Endothelial cell of umbilical vein (primary cell): ENCODE measurements at regions of chr5 and their contacts with region 1.

Region 1: DNA sequence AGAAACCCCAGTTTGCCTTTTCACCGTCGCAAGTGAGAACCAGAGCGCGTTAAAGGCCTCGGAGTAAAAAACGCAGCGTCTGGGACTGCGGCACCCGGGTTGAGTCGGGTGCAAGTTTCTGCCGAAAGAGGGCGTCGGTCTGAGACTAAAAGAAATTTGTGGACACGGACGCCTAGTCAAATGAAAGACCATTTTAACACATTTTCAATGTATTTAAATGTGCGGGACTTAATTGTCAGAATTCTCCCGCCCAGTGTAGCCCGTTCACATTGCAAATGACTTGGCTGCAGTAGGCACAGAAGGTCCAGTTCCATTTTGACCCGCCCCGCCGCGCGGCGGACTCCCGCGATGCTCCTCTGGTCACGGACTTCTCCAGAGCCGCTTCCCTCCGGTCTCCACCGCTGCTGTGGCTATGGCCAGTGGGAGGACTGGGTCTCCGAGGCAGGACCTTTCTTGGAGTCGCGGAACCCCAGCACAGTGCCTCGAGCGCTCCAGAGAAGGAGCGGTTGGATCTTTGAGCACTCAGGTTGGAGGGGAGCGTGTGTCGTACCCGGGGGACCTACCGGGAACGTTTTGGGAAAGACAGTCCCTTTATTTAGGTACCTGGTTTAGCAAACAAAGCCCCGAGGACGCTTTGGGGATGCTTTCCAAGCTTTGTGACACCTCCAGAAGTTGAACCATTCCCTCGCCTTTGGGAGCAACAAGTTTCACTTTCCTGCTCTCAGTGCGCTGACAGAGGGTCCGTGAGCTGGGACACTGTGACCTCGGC is 1.2 kb upstream of the NPR3 start:
- DNase-seq: peak; percentile 75
- H3K4me3 ChIP-seq: peak overlapping the region; percentile 60 to 77 (median 65)
- H3K27ac ChIP-seq: no peak overlapping the region
- H3K4me1 ChIP-seq: peaks cover 11% of the 10 kb centered on the region
- H3K27me3 ChIP-seq: peaks cover 29 to 44% of the 10 kb centered on the region in 2 experiments
- CTCF ChIP-seq: peak; percentile 60 to 72
- POLR2A ChIP-seq: no peak

Region 2: DNA sequence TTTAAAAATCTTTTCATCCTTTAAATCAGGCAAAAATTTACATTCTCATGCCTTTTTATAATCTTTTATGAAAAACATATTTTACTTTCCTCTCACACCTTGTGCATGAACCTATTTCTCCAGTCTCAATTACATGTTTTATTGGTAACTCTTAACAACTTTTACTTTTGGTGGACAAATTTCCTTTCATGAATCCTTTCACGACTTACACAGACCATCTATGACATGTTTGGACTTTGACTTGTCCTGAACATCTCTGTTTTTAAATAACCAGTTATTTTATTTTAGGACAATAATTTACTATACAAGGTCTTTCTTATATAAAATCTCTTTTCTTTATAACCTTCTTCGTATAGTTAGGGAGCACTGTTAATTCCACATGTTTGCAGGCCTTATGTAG is 370.8 kb before region 1 on chr5:
- CTCF ChIA-PET with region 1: no interaction called
- POLR2A ChIA-PET with region 1: no interaction called
- dilution Hi-C with region 1: no loop called
- intact Hi-C with region 1: no loop called
- DNase-seq: no peak
- H3K4me3 ChIP-seq: no peak overlapping the region
- H3K27ac ChIP-seq: no peak overlapping the region
- H3K4me1 ChIP-seq: no peaks in the 10 kb centered on the region
- H3K27me3 ChIP-seq: no peaks in the 10 kb centered on the region
- CTCF ChIP-seq: no peak
- POLR2A ChIP-seq: no peak

Region 3: GRCh38 chr5:32942225-32942989 is 232.4 kb after region 1 on chr5:
- CTCF ChIA-PET with region 1: no interaction called
- POLR2A ChIA-PET with region 1: interaction called, 5 read pairs
- dilution Hi-C with region 1: no loop called
- intact Hi-C with region 1: loop called (anchors 2 kb)
- DNase-seq: peak; percentile 26
- H3K4me3 ChIP-seq: no peak overlapping the region
- H3K27ac ChIP-seq: no peak overlapping the region
- H3K4me1 ChIP-seq: no peaks in the 10 kb centered on the region
- H3K27me3 ChIP-seq: no peaks in the 10 kb centered on the region
- CTCF ChIP-seq: peak; percentile 38 to 40
- POLR2A ChIP-seq: no peak

Region 4: GRCh38 chr5:32984851-32985610 is 275.1 kb after region 1 on chr5:
- CTCF ChIA-PET with region 1: no interaction called
- POLR2A ChIA-PET with region 1: no interaction called
- dilution Hi-C with region 1: no loop called
- intact Hi-C with region 1: loop called (anchors 5 kb)
- DNase-seq: peak; percentile 18
- H3K4me3 ChIP-seq: no peak overlapping the region
- H3K27ac ChIP-seq: peak overlapping the region; percentile 3
- H3K4me1 ChIP-seq: no peaks in the 10 kb centered on the region
- H3K27me3 ChIP-seq: no peaks in the 10 kb centered on the region
- CTCF ChIP-seq: no peak
- POLR2A ChIP-seq: no peak

Region 5: GRCh38 chr5:33180900-33181299 is 470.9 kb after region 1 on chr5:
- CTCF ChIA-PET with region 1: interaction called, 5 read pairs
- POLR2A ChIA-PET with region 1: no interaction called
- dilution Hi-C with region 1: no loop called
- intact Hi-C with region 1: loop called (anchors 10 kb)
- DNase-seq: peak; percentile 4
- H3K4me3 ChIP-seq: no peak overlapping the region
- H3K27ac ChIP-seq: no peak overlapping the region
- H3K4me1 ChIP-seq: no peaks in the 10 kb centered on the region
- H3K27me3 ChIP-seq: no peaks in the 10 kb centered on the region
- CTCF ChIP-seq: no peak
- POLR2A ChIP-seq: no peak

Region 6: DNA sequence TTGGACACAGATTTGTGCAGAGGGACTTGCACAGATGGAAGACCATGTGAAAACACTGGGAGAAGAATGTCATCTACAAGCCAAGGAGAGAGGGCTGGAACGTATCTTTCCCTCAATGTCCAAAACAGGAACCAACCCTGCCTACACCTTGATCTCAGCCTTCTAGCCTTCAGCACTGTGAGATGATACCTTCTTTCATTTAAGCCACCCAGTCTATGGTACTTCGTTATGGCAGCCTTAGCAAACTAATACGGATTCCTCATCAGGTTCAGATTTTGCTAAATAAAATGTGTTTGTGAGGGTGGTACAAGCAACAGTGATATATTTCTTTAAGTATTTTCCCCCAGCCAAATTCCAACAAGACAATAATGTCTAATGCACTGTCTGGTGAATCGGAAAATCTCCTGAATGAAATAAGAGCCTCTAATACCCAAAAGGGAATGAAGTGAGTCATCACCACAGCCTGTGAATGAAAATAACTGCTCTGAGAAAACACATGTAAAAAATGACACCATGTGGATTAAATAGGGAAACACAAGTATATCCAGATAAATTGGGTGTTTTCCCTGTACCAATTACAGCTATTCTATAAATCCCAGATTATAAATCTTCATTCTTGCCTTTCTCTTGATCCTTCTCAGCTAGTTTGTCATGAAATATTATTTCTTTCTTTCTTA is 548.0 kb after region 1 on chr5:
- CTCF ChIA-PET with region 1: interaction called, 5 read pairs
- POLR2A ChIA-PET with region 1: no interaction called
- dilution Hi-C with region 1: no loop called
- intact Hi-C with region 1: loop called (anchors 1 kb)
- DNase-seq: peak; percentile 80
- H3K4me3 ChIP-seq: no peak overlapping the region
- H3K27ac ChIP-seq: no peak overlapping the region
- H3K4me1 ChIP-seq: peaks cover 9% of the 10 kb centered on the region
- H3K27me3 ChIP-seq: no peaks in the 10 kb centered on the region
- CTCF ChIP-seq: no peak
- POLR2A ChIP-seq: no peak

Region 7: DNA sequence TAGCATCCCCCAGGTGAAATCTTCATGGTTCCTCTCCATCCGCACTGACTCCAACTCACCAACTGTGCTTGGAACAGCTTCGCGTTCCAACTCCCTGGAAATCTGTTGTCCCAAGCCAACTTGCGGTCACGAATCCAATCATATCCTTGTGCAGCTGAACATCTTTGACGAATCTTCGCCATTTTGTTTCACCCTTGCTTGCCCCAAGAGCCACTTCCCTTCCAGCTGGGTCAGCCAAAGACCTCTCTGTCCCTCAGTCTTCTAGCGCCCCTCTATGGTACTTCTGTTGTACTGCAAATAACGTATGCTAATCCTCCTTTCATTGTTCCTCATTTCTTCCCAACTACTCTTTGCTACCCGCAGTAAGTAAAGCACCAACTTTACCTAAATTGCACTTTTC is 669.8 kb after region 1 on chr5:
- CTCF ChIA-PET with region 1: interaction called, 9 read pairs
- POLR2A ChIA-PET with region 1: no interaction called
- dilution Hi-C with region 1: no loop called
- intact Hi-C with region 1: loop called (anchors 1 kb)
- DNase-seq: peak; percentile 56
- H3K4me3 ChIP-seq: no peak overlapping the region
- H3K27ac ChIP-seq: no peak overlapping the region
- H3K4me1 ChIP-seq: no peaks in the 10 kb centered on the region
- H3K27me3 ChIP-seq: peaks cover 2 to 4% of the 10 kb centered on the region in 2 experiments
- CTCF ChIP-seq: peak; percentile 66 to 69
- POLR2A ChIP-seq: no peak

Region 8: DNA sequence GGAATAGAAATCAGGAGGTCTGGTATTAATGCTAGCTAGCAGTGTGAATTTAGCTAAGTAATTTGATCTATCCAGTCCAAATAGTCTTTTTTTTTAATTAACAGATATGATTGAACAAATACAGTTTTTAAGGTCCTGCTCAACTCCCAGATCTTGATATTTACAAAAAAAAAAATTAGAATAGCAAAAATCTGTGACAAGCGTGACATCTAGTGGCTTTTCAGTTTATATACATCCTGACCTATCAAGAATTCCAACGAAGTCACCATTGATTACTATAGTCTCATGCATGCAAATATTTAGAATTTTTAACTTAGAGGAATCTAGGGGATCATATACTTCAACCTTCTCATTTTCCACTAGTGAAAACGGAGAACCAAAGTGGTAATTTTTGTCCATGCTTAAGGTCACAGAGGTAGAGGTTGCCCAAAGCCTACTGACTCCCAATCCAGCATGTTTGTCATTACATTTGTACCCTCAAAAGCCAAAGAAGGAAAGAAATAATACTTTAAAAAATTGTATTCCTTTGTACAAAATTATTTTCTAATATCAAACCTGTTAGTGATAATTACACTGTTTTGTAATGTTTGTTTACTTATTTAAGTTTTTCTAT is 713.2 kb after region 1 on chr5:
- CTCF ChIA-PET with region 1: interaction called, 39 read pairs
- POLR2A ChIA-PET with region 1: no interaction called
- dilution Hi-C with region 1: no loop called
- intact Hi-C with region 1: loop called (anchors 1 kb)
- DNase-seq: peak; percentile 66
- H3K4me3 ChIP-seq: no peak overlapping the region
- H3K27ac ChIP-seq: no peak overlapping the region
- H3K4me1 ChIP-seq: no peaks in the 10 kb centered on the region
- H3K27me3 ChIP-seq: peaks cover 0 to 2% of the 10 kb centered on the region in 2 experiments
- CTCF ChIP-seq: peak; percentile 11 to 17
- POLR2A ChIP-seq: no peak